AG04450 (cell line): ENCODE measurements at regions of chr2 and their contacts with region 1.

Region 1: GRCh38 chr2:44981136-44982108 is 27.8 kb downstream of the SIX2 start:
- DNase-seq: peak; percentile 55
- H3K4me3 ChIP-seq: no peak overlapping the region
- H3K27ac ChIP-seq: no peak overlapping the region
- H3K27me3 ChIP-seq: peaks cover 16% of the 10 kb centered on the region
- CTCF ChIP-seq: peak; percentile 86

Region 2: DNA sequence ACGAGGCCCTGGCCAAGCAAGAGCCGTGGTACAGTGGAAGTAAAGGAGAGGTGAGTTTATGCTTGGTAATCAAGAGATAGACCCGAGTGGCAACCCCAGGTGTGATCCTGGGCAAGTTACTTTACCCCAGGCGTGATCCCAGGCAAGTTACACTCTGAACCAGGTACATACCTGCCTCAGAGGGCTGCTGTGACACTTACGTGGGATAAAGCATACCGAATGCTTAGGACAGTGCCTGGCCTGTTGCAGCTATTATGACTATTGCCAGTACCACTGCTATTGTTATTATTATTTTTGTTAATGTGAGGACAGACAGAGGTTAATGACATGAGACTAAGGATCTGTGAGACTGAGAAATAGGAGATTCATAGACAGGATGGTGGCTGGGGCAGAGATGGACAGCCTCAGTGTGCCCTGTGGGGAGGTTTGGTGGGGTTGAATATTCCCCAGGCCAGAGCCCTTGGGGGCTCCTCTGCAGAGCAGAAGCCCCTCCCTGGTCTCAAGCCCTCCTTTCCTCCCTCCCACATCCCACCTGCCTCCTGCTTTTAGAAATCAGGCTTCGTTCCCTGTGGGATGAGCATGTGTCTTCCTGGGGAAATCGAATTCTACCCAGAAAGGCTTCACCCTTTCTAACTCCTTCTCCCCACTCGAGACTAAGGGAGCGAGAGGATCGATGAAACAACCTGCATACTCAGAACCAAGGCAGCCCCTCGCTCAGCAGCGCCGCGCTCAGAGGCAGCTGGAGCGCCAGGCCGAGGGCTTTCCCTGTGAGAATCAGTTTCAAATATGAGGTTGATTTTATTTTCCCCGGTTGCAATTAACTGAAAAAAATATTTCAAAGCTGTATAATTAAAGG is 101.9 kb before region 1 on chr2:
- CTCF ChIA-PET with region 1: no interaction called
- POLR2A ChIA-PET with region 1: no interaction called
- DNase-seq: no peak
- H3K4me3 ChIP-seq: no peak overlapping the region
- H3K27ac ChIP-seq: no peak overlapping the region
- H3K27me3 ChIP-seq: peaks cover 2% of the 10 kb centered on the region
- CTCF ChIP-seq: no peak

Region 3: DNA sequence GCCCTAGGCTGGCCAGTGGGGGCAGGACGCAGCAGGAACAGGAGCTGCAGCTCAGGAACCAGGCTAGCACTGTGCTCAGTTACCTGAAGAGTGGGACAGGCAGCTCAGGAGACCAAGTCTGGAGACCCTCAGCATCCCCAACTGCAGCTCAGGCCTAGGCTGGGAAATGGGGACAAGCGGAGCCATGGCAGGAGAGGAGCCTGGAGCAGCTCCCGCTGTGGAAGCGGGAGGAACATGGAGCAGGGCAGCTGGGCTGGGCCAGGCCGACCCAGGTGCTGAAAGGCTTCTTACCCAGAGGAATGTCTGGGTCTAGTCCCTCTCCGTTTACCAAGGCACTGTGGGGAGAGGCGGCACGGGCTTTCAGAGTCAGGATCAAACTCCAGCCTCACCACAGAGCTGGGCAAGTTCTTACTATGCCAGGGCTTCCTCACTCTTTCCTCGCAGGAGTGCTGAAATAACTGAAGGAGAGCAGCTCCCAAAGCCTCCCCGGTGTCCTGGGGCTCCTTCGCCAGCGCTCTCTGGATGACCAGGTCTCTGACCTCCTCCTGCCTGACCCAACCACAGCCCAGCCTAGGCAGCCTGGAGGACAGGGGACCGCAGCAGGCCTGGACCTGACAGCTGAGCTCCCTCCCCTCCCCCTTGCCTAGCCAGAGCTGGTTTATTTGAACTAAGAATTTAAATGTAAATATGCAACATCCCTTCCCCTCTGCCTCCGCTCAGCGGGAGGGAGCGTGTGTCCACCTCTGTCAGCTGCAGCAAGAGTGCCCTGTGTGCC is 275.6 kb after region 1 on chr2:
- CTCF ChIA-PET with region 1: no interaction called
- POLR2A ChIA-PET with region 1: no interaction called
- DNase-seq: no peak
- H3K4me3 ChIP-seq: no peak overlapping the region
- H3K27ac ChIP-seq: no peak overlapping the region
- H3K27me3 ChIP-seq: peaks cover 13% of the 10 kb centered on the region
- CTCF ChIP-seq: no peak

Region 4: GRCh38 chr2:45483997-45484396 is 502.6 kb after region 1 on chr2:
- CTCF ChIA-PET with region 1: interaction called, 17 read pairs
- POLR2A ChIA-PET with region 1: no interaction called
- DNase-seq: no peak
- H3K4me3 ChIP-seq: no peak overlapping the region
- H3K27ac ChIP-seq: no peak overlapping the region
- H3K27me3 ChIP-seq: no peaks in the 10 kb centered on the region
- CTCF ChIP-seq: peak; percentile 33